Prostate gland (tissue), 2 donors: ENCODE measurements at regions of chr1 and their contacts with region 1.

Region 1: GRCh38 chr1:220527908-220528678 is at the start of gene MARK1:
- DNase-seq: peak; percentile 57
- H3K4me3 ChIP-seq: peak within 1 kb of the TSS; percentile 65 to 79
- H3K27ac ChIP-seq: peak within 1 kb of the TSS; percentile 80
- H3K4me1 ChIP-seq: no peaks in the 10 kb centered on the region
- H3K27me3 ChIP-seq: no peaks in the 10 kb centered on the region
- CTCF ChIP-seq: no peak
- POLR2A ChIP-seq: no peak
- total RNA-seq, gene MARK1: 7.2 to 20.9 TPM

Region 2: DNA sequence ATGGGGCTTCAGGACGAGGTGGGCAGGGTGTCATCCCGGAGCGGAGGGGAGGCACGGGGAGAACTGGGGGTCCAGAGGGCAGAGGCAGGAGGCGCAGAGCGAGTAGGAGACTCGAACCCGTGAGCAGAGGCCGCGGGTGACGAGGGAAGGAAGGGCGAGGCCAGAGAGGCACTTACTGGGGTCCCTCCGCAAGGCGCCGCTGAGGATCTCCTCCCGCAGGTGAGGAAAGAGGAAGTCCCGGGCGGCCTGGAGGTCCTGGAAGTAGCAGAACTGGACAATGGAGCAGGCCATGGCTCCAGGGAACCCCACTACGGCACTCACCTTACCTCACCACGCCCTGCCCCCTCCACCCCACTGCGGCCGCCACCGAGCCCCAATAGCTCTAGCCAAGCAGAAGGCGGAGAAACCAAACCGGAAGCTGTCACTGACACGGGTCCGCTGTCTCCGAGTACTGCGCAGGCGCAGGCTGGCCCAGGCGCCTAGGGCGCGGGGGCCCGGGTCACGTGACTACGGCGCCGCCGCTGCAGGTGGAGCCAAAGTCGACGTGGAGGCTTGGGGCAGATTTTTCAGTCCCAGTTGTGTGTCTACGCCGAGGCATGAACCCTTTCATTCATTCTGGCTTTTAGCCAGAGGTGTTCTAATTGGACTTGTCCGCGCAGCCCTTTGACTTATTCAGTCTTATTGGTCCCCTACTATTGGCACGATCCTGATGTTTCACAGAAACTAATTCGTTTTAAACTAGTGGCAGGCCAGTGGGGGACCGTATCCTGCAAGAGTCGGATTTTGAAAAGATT is 255.8 kb before region 1 on chr1 and contains the start of gene RAB3GAP2:
- intact Hi-C with region 1: loop called (anchors 5 kb)
- DNase-seq: peak; percentile 91
- H3K4me3 ChIP-seq: peak within 1 kb of the TSS; percentile 74 to 90
- H3K27ac ChIP-seq: peak within 1 kb of the TSS; percentile 68 to 89
- H3K4me1 ChIP-seq: peaks cover 6% of the 10 kb centered on the region
- H3K27me3 ChIP-seq: no peaks in the 10 kb centered on the region
- CTCF ChIP-seq: peak in 2 of 4 experiments; percentile 13 to 17
- POLR2A ChIP-seq: peak; percentile 54
- total RNA-seq, gene RAB3GAP2: 17.6 to 20.7 TPM

Region 3: GRCh38 chr1:220575718-220576497 is 47.8 kb after region 1 on chr1:
- intact Hi-C with region 1: no loop called
- DNase-seq: no peak
- H3K4me3 ChIP-seq: no peak overlapping the region
- H3K27ac ChIP-seq: no peak overlapping the region
- H3K4me1 ChIP-seq: no peaks in the 10 kb centered on the region
- H3K27me3 ChIP-seq: no peaks in the 10 kb centered on the region
- CTCF ChIP-seq: no peak
- POLR2A ChIP-seq: no peak